ENCODE measurements at regions of chr7 and their contacts with region 1.

Region 1: DNA sequence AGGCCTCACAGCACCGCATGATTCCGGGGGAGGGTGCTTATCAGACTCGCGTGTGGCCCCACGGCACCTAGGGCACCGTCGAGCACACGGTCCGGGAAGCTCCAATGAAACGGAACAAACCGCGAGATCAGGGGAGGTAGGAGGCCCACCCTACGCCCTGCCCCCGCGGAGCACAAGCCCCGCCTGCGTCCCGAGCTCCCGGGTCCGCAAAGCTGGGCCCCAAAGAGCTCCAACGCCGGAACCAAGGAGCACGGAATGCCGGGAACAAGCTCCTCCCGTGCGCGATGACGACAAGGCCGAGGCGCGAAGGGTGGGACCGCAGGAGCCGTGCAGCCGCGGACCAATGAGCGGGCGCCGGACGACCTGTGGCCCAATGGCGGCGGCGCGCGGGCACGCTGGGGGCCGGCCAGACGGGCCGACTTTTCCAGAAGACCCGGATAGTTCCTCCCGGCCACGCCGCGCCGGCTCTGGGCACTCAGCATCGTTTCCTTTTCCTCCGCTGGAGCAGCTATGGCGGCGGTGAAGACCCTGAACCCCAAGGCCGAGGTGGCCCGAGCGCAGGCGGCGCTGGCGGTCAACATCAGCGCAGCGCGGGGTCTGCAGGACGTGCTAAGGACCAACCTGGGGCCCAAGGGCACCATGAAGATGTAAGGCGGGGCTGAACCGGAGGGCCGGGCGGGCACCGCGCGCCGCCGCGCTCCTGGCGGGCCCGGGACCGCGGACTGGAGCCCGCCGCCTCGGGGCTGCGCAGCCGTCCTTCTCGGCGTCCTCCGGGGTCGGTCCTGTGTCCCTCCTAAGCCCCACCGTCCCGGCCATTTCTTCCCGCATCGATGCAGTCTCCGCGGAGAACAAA is at the starts of genes CCT6A and PSPH:
- DNase-seq: peak; percentile 74 to 93 (median 78)
- ATAC-seq: peak; percentile 95
- H3K4me3 ChIP-seq: peak within 1 kb of the TSS; percentile 88
- H3K4me3 Mint-ChIP-seq: peak within 1 kb of the TSS; percentile 91 to 99 (median 96)
- H3K27ac ChIP-seq: peak within 1 kb of the TSS; percentile 91
- H3K27ac Mint-ChIP-seq: peak within 1 kb of the TSS; percentile 78 to 96 (median 93)
- H3K4me1 ChIP-seq: peaks cover 6 to 9% of the 10 kb centered on the region in 2 donors
- H3K4me1 Mint-ChIP-seq: peaks cover 26 to 59% (median 45%) of the 10 kb centered on the region in 7 donors
- H3K27me3 ChIP-seq: no peaks in the 10 kb centered on the region
- H3K27me3 Mint-ChIP-seq: no peaks in the 10 kb centered on the region
- total RNA-seq, gene CCT6A: 38.7 to 143 (median 58.6) TPM
- total RNA-seq, gene PSPH: 3.5 to 10.4 (median 6.5) TPM

Region 2: GRCh38 chr7:55887821-55888247 is 163.7 kb before region 1 on chr7:
- CTCF ChIA-PET with region 1: no interaction called
- POLR2A ChIA-PET with region 1: no interaction called
- intact Hi-C with region 1: loop called in 1 of 2 experiments (anchors 1 kb)
- DNase-seq: peak in 2 of 9 donors; percentile 2 to 6
- ATAC-seq: no peak
- H3K4me3 ChIP-seq: peak overlapping the region; percentile 46
- H3K4me3 Mint-ChIP-seq: peak overlapping the region; percentile 82 to 89 (median 86)
- H3K27ac ChIP-seq: peak overlapping the region; percentile 61
- H3K27ac Mint-ChIP-seq: peak overlapping the region; percentile 83 to 94 (median 90)
- H3K4me1 ChIP-seq: no peaks in the 10 kb centered on the region
- H3K4me1 Mint-ChIP-seq: peaks cover 0 to 10% (median 5%) of the 10 kb centered on the region in 7 donors
- H3K27me3 ChIP-seq: no peaks in the 10 kb centered on the region
- H3K27me3 Mint-ChIP-seq: no peaks in the 10 kb centered on the region

Region 3: GRCh38 chr7:55917771-55918170 is 133.8 kb before region 1 on chr7:
- CTCF ChIA-PET with region 1: no interaction called
- POLR2A ChIA-PET with region 1: no interaction called
- intact Hi-C with region 1: no loop called
- DNase-seq: no peak
- ATAC-seq: no peak
- H3K4me3 ChIP-seq: no peak overlapping the region
- H3K4me3 Mint-ChIP-seq: no peak overlapping the region
- H3K27ac ChIP-seq: no peak overlapping the region
- H3K27ac Mint-ChIP-seq: peak overlapping the region in 1 of 9 donors; percentile 65
- H3K4me1 ChIP-seq: no peaks in the 10 kb centered on the region
- H3K4me1 Mint-ChIP-seq: peaks cover 0 to 5% (median 0%) of the 10 kb centered on the region in 7 donors
- H3K27me3 ChIP-seq: no peaks in the 10 kb centered on the region
- H3K27me3 Mint-ChIP-seq: no peaks in the 10 kb centered on the region

Region 4: DNA sequence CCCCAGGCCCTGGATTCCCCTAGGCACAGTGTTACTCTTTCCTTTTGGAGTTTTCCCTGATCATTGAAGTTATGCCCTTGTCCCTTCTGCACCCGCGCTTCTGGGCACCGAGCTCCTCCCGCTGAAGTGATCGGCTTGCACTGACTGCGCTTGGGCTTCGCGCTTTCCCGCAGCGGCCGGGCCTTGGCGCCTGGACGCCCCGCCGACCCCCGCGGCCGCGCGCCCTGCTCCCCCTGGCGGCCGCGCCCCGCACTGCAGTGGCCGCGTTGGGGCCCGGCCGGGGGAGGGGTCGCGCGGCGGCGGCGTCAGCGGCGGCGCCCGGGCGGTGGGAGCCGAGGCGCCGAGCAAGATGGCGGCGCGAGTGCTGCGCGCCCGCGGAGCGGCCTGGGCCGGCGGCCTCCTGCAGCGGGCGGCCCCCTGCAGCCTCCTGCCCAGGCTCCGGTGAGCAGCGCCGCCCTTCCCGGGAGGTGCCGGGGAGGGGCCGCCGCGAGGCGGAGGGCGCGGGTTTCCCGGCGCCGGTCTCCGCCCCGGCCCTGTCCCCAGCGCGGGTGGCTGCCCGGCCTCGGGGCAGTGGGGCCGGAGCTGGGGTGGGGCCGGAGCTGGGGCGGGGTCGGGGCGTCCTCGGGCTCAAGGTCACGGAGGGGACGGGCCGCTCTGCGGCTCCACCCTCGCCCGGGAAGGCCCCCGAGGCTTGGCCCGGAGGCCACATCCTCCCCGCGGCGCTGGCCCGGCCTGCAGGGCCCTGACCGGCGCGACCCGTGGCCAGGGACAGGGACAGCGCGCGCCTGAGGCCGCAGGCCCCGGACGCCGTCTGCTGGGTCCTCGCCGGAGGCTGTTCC is 87.1 kb before region 1 on chr7 and contains the start of gene NIPSNAP2:
- CTCF ChIA-PET with region 1: no interaction called
- POLR2A ChIA-PET with region 1: interaction called, 5 read pairs
- intact Hi-C with region 1: loop called in 1 of 2 experiments (anchors 2 kb)
- DNase-seq: peak; percentile 37 to 86 (median 68)
- ATAC-seq: peak; percentile 94
- H3K4me3 ChIP-seq: peak within 1 kb of the TSS; percentile 50
- H3K4me3 Mint-ChIP-seq: peak within 1 kb of the TSS; percentile 79 to 91 (median 88)
- H3K27ac ChIP-seq: peak within 1 kb of the TSS; percentile 89
- H3K27ac Mint-ChIP-seq: peak within 1 kb of the TSS; percentile 89 to 94 (median 91)
- H3K4me1 ChIP-seq: peaks cover 10% of the 10 kb centered on the region in 2 donors
- H3K4me1 Mint-ChIP-seq: peaks cover 24 to 55% (median 42%) of the 10 kb centered on the region in 7 donors
- H3K27me3 ChIP-seq: no peaks in the 10 kb centered on the region
- H3K27me3 Mint-ChIP-seq: no peaks in the 10 kb centered on the region
- total RNA-seq, gene NIPSNAP2: 30.1 to 37.8 (median 34.4) TPM

Region 5: GRCh38 chr7:56033671-56034432 is 17.7 kb before region 1 on chr7:
- CTCF ChIA-PET with region 1: no interaction called
- POLR2A ChIA-PET with region 1: interaction called, 5 read pairs
- intact Hi-C with region 1: loop called (anchors 1 kb)
- DNase-seq: peak; percentile 51 to 81 (median 77)
- ATAC-seq: peak; percentile 98
- H3K4me3 ChIP-seq: peak overlapping the region; percentile 63
- H3K4me3 Mint-ChIP-seq: peak overlapping the region; percentile 78 to 96 (median 88)
- H3K27ac ChIP-seq: peak overlapping the region; percentile 70
- H3K27ac Mint-ChIP-seq: peak overlapping the region; percentile 9 to 90 (median 75)
- H3K4me1 ChIP-seq: no peaks in the 10 kb centered on the region
- H3K4me1 Mint-ChIP-seq: peaks cover 5 to 18% (median 15%) of the 10 kb centered on the region in 7 donors
- H3K27me3 ChIP-seq: no peaks in the 10 kb centered on the region
- H3K27me3 Mint-ChIP-seq: no peaks in the 10 kb centered on the region